ENCODE measurements at regions of chr14 and their contacts with region 1.

Region 1: GRCh38 chr14:67704484-67705089 is 2.9 kb downstream of the RDH12 start:
- DNase-seq: peak; percentile 45
- ATAC-seq: peak; percentile 95
- H3K4me3 ChIP-seq: no peak overlapping the region
- H3K27ac ChIP-seq: no peak overlapping the region
- H3K4me1 ChIP-seq: no peaks in the 10 kb centered on the region
- H3K27me3 ChIP-seq: no peaks in the 10 kb centered on the region
- CTCF ChIP-seq: peak; percentile 70 to 89 (median 77)
- EP300 ChIP-seq: no peak
- POLR2A ChIP-seq: no peak
- RAD21 ChIP-seq: peak; percentile 94

Region 2: DNA sequence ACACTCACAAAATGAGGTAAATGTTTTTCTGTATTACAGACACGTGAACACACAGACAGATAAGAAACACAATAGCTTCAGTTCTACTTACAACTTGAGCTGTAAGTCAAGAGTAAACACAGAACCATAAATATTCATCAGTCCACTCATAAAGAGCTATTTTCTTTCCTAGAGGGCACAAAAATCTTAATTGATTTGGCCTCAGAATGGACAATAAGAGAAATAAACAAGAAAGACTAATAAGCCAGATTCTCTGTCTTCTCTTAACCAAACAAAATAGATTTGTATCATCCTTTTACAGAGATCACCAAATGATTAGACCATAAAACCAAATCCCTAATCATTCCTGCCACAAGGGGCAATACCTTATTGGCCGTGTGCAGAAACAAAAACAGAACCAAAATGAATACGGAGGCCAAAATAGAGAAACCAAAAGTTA is 553.4 kb before region 1 on chr14:
- CTCF ChIA-PET with region 1: no interaction called
- POLR2A ChIA-PET with region 1: no interaction called
- RAD21 ChIA-PET with region 1: no interaction called
- SMC1A ChIA-PET with region 1: no interaction called
- in situ Hi-C with region 1: no loop called
- intact Hi-C with region 1: no loop called
- DNase-seq: no peak
- ATAC-seq: no peak
- H3K4me3 ChIP-seq: no peak overlapping the region
- H3K27ac ChIP-seq: no peak overlapping the region
- H3K4me1 ChIP-seq: no peaks in the 10 kb centered on the region
- H3K27me3 ChIP-seq: no peaks in the 10 kb centered on the region
- CTCF ChIP-seq: no peak
- EP300 ChIP-seq: no peak
- POLR2A ChIP-seq: no peak
- RAD21 ChIP-seq: no peak

Region 3: GRCh38 chr14:67426983-67427606 is 277.5 kb before region 1 on chr14:
- CTCF ChIA-PET with region 1: interaction called, 41 read pairs
- POLR2A ChIA-PET with region 1: no interaction called
- RAD21 ChIA-PET with region 1: interaction called, 55 read pairs
- SMC1A ChIA-PET with region 1: interaction called, 46 read pairs
- in situ Hi-C with region 1: loop called (anchors 10 kb)
- intact Hi-C with region 1: loop called (anchors 2 kb)
- DNase-seq: no peak
- ATAC-seq: peak; percentile 95
- H3K4me3 ChIP-seq: no peak overlapping the region
- H3K27ac ChIP-seq: no peak overlapping the region
- H3K4me1 ChIP-seq: no peaks in the 10 kb centered on the region
- H3K27me3 ChIP-seq: peaks cover 0 to 6% of the 10 kb centered on the region in 2 experiments; a peak in 2 of 4 replicates
- CTCF ChIP-seq: peak; percentile 84 to 90 (median 87)
- EP300 ChIP-seq: no peak
- POLR2A ChIP-seq: no peak
- RAD21 ChIP-seq: peak; percentile 99

Region 4: DNA sequence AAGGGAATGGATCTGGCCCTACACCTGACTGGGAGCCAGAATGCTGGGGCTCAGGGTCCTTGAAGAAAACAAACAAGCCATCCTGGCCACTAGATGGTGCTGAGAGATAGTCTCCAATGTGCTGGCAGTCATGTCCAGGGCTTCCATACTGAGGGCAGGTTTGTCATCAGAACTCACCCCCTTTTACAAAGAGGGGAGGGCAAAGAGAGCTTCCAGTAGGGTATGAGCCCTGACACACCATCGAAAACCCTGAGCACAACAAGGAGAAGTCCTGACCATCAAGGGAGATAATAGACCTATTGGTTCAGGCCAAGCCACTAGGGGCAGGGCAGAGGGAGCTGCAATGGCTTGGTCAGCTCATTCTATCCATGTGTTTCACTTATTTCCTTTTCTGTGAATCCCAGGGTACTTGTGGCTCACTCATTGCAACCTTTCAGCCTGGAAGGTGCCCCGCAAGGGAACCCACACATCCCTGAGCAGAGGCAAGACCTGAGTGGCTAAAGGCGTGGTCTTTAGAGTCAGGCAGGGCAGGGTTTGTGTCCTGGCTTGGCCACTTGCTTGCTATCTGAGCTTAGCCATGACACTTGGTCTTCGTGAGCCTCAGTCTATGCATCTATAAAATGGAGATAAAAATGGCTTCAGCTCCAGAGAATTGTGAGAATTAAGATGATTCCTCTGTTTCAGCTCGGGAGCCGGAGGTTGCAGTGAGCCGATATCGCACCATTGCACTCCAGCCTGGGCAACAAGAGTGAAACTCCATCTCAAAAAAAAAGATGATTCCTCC is 177.7 kb before region 1 on chr14:
- CTCF ChIA-PET with region 1: interaction called, 35 read pairs
- POLR2A ChIA-PET with region 1: no interaction called
- RAD21 ChIA-PET with region 1: interaction called, 25 read pairs
- SMC1A ChIA-PET with region 1: interaction called, 32 read pairs
- in situ Hi-C with region 1: no loop called
- intact Hi-C with region 1: loop called (anchors 2 kb)
- DNase-seq: peak; percentile 13
- ATAC-seq: peak; percentile 96
- H3K4me3 ChIP-seq: no peak overlapping the region
- H3K27ac ChIP-seq: no peak overlapping the region
- H3K4me1 ChIP-seq: no peaks in the 10 kb centered on the region
- H3K27me3 ChIP-seq: peaks cover 0 to 9% of the 10 kb centered on the region in 2 experiments; a peak in 1 of 4 replicates
- CTCF ChIP-seq: peak; percentile 53 to 82 (median 62)
- EP300 ChIP-seq: no peak
- POLR2A ChIP-seq: no peak
- RAD21 ChIP-seq: peak; percentile 68

Region 5: DNA sequence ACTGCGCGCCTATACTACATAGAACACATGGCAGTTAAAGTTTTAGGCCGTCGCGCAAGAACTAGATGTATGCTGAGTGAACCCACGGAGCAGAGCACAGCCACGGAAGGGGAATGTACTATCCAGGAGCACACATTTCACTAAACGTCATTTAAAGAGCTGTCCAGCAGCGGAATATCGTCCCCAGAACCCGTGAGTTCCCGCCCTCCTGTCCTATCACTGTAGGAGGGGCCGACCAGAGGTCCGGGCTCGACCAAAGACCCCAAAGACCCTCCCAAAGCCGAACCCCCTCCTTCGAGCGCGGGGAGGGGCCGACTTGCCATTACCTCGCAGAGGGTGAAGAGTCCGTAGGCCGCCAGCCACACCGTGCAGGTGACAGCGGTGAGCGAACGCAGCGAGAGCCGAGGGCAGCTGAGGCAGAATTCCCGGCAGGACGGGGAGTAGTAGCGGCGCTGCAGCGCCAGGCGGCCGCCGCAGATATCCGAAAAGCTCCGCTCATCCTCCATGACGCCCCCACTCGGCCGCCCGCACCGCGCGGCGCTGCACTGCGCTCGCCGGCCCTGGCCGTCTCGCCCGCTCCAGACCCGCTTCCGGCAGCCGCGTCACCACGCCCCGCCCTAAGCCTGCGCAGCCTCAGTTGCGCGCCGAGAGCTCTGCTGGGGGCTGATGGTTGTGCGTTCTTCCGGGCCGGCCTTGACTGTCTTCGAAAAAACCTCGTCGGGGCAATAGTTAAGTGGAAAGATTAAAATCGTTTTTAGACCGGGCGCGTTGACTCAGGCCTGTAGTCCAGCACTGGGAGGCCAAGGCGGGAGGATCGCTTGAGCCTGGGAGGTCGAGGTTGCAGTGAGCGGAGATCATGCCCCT is 104.7 kb before region 1 on chr14 and contains the start of gene PIGH:
- CTCF ChIA-PET with region 1: interaction called, 24 read pairs
- POLR2A ChIA-PET with region 1: no interaction called
- RAD21 ChIA-PET with region 1: interaction called, 13 read pairs
- SMC1A ChIA-PET with region 1: interaction called, 20 read pairs
- in situ Hi-C with region 1: no loop called
- intact Hi-C with region 1: no loop called
- DNase-seq: peak; percentile 56
- ATAC-seq: peak; percentile 96
- H3K4me3 ChIP-seq: peak within 1 kb of the TSS; percentile 85
- H3K27ac ChIP-seq: peak within 1 kb of the TSS; percentile 70
- H3K4me1 ChIP-seq: peaks cover 9% of the 10 kb centered on the region; the same call in 1 of the 2 replicates
- H3K27me3 ChIP-seq: no peaks in the 10 kb centered on the region
- CTCF ChIP-seq: peak; percentile 49 to 61 (median 50); a peak in 5 of 6 replicates
- EP300 ChIP-seq: no peak
- POLR2A ChIP-seq: peak; percentile 85
- RAD21 ChIP-seq: no peak
- polyA plus RNA-seq, gene PIGH: 15.5 to 17.8 TPM

Region 6: DNA sequence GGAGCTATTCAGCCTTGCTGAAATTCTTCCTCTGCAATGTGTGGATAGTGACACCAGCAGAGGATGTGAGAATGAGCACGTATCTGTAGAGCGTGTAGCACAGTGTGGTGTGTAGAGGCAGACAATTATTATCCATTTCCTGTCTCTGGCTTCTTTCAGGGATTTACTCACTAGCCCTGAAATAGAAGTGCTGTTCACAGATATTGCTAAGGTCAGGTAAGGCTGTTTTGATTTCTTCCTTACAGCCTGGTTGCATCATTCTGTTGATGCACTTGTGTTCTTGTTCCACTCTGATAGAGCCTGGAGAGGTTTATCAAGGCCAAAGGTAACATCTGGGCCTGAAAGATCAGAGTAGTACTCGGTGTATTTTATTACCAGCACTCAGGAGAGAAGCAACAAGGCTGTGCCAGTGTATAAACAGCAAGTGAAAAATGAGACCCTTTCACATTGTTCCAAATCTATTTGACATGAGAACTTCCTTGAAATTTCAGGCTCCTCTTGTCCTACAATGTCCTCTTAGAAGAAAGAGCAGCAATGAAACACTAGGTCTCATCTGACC is 68.1 kb before region 1 on chr14:
- CTCF ChIA-PET with region 1: interaction called, 13 read pairs
- POLR2A ChIA-PET with region 1: no interaction called
- RAD21 ChIA-PET with region 1: interaction called, 4 read pairs
- SMC1A ChIA-PET with region 1: interaction called, 3 read pairs
- in situ Hi-C with region 1: no loop called
- intact Hi-C with region 1: no loop called
- DNase-seq: peak; percentile 39
- ATAC-seq: peak; percentile 59
- H3K4me3 ChIP-seq: no peak overlapping the region
- H3K27ac ChIP-seq: no peak overlapping the region
- H3K4me1 ChIP-seq: no peaks in the 10 kb centered on the region
- H3K27me3 ChIP-seq: no peaks in the 10 kb centered on the region
- CTCF ChIP-seq: no peak
- EP300 ChIP-seq: no peak
- POLR2A ChIP-seq: no peak
- RAD21 ChIP-seq: no peak

Region 7: DNA sequence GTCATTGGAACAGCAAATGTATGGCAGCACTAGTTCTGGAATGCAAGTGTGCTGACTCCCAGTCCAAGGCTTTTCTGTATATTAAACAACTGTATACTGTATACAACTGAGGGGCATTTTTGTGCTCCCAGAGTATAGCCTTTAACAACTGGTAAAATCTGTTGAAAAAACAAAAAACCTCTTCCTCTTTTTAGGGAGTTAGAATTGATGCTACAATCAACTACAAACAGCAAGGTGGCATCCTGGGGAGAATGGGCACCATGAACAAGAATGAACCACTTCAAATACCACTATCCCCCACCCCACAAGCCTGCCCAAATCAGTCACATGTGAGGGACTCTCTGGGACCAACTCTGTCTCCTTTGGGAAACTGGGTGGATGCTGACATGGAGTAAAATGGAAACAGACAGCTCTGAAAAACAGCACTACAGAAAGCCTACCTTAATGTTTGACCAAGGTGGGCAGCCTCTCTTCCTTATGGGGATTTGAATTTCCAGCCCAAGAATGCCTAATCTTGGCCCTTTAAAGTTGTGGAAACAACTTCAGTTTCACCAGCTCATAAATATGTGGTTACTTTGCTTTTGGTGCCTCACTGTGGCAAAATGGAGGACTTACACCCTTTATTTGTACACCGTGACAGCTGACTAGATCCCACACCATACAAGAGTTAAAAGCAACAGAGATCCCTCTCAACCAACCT is 37.7 kb before region 1 on chr14:
- CTCF ChIA-PET with region 1: interaction called, 223 read pairs
- POLR2A ChIA-PET with region 1: interaction called, 14 read pairs
- RAD21 ChIA-PET with region 1: interaction called, 144 read pairs
- SMC1A ChIA-PET with region 1: interaction called, 131 read pairs
- in situ Hi-C with region 1: no loop called
- intact Hi-C with region 1: loop called (anchors 1 kb)
- DNase-seq: peak; percentile 30
- ATAC-seq: peak; percentile 80
- H3K4me3 ChIP-seq: no peak overlapping the region
- H3K27ac ChIP-seq: no peak overlapping the region
- H3K4me1 ChIP-seq: peaks cover 17% of the 10 kb centered on the region
- H3K27me3 ChIP-seq: no peaks in the 10 kb centered on the region
- CTCF ChIP-seq: peak; percentile 57 to 71 (median 65)
- EP300 ChIP-seq: no peak
- POLR2A ChIP-seq: no peak
- RAD21 ChIP-seq: peak; percentile 86